Gastrocnemius medialis (tissue), 4 donors: ENCODE measurements at regions of chr19 and their contacts with region 1.

Region 1: DNA sequence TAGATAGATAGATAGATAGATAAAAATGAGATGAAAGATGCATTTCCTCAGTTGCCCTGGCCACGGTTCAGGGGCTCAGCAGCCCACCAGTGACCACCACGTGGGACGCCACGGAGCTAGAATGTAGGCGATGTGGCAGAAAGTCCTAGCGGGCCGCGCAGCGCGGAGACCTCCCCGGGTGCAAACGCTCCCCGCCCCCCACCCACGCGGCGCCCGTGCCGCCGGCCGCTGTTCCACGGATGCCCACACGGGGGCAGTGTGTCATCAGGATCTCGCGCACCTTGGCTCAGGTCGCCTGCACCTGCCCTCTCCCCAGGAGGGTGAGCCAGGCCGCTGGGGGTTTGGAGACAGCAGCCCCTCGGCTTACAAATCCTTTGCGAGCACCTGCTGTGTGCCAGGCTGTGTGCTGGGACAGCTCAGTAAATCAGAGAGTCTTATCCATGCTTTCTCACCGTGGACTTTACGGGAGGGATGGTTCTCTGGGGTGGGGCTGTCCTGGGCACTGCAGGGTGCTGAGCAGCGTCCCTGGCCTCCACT is 13.7 kb upstream of the TLE5 start:
- DNase-seq: no peak
- ATAC-seq: peak; percentile 55 to 61
- H3K4me3 ChIP-seq: peak overlapping the region in 2 of 4 donors; percentile 13 to 26
- H3K27ac ChIP-seq: peak overlapping the region in 2 of 4 donors; percentile 3 to 70
- H3K4me1 ChIP-seq: peaks cover 9 to 11% of the 10 kb centered on the region in 2 donors
- H3K27me3 ChIP-seq: no peaks in the 10 kb centered on the region
- CTCF ChIP-seq: peak; percentile 76 to 98 (median 96)
- POLR2A ChIP-seq: no peak

Region 2: GRCh38 chr19:3125900-3126524 is 50.0 kb after region 1 on chr19:
- in situ Hi-C with region 1: no loop called
- intact Hi-C with region 1: loop called (anchors 5 kb)
- DNase-seq: peak in 1 of 2 donors; percentile 49
- ATAC-seq: peak; percentile 44 to 78
- H3K4me3 ChIP-seq: no peak overlapping the region
- H3K27ac ChIP-seq: no peak overlapping the region
- H3K4me1 ChIP-seq: no peaks in the 10 kb centered on the region
- H3K27me3 ChIP-seq: no peaks in the 10 kb centered on the region
- CTCF ChIP-seq: peak; percentile 51 to 82 (median 73)
- POLR2A ChIP-seq: no peak

Region 3: DNA sequence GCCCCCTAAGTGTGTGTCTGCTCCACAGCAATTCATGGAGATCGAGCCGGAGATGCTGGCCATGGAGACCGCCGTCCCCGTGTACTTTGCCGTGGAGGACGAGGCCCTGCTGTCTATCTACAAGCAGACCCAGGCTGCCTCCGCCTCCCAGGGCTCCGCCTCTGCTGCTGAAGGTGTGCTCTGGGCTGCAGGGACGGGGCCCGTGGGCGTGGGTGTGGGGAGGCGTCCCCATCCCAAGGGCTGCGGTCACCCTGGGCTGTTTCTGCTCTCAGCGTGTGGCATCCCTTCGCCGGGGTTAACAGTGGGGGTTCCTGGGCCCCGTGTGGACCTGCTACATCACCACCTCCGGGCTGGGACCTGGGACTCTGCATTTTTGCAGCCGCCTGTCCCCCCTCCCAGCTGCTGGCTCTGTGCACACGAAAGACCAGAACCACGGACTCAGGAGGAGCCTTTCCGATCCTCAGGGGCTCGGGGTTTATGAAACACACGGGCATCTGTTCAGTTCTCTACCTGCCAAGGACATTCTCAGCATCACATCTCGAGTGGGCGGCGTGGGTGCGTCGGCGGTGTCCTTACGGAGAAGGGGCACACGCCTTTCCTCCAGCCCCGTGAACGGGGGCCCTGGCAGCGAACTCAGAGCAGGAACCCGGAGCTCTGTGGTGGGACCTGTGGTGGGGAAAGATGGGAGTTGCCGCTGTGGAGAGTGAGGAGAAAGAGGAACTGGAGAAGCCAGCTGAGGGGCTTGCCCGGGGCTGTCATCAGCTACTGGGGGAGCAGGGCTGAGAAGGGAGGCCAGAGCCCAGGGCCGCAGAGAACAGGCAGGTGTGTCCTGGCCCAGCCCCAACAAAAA is 117.5 kb after region 1 on chr19:
- in situ Hi-C with region 1: no loop called
- intact Hi-C with region 1: no loop called
- DNase-seq: no peak
- ATAC-seq: no peak
- H3K4me3 ChIP-seq: no peak overlapping the region
- H3K27ac ChIP-seq: no peak overlapping the region
- H3K4me1 ChIP-seq: no peaks in the 10 kb centered on the region
- H3K27me3 ChIP-seq: no peaks in the 10 kb centered on the region
- CTCF ChIP-seq: no peak
- POLR2A ChIP-seq: no peak